ENCODE measurements at regions of chr17 and their contacts with region 1.

Region 1: DNA sequence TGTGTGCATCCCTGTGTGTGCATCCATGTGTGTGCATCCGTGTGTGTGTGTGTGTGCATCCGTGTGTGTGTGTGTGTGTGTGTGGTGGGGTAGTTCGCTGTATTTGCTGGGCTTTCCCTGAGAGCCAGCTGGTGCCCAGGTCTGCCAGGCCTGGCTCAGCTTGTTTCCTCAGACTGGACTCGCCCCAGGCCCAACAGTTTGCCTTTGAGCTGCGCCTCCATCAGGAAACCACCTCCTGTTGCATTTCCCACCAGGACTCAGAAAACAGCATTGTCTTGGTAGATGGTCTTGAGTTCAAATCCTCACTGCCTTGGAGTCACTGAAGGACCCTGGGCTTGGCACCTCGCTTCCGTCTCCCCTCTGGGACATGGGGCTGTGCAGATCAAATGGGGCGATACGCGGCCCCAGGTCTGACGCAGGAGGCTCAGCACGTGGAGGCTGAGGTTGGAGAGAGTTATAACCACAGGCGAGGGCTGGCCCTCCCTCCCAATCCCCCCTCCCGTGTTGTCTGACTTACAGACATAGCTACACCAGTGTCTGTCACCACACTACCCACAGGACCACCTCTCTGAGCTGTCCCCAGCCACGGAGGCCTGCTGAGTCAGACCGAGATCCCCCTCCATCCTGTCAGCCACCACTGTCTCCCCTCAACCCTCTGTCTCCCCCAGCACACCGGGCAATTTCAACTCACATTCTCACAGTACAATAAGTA is 4.7 kb downstream of the ITGAE start:
- DNase-seq: peak; percentile 99
- ATAC-seq: peak; percentile 76
- H3K4me3 Mint-ChIP-seq: peak overlapping the region; percentile 43
- H3K27ac Mint-ChIP-seq: peak overlapping the region; percentile 83
- H3K4me1 Mint-ChIP-seq: peaks cover 66% of the 10 kb centered on the region
- H3K27me3 Mint-ChIP-seq: no peaks in the 10 kb centered on the region
- CTCF ChIP-seq: no peak

Region 2: GRCh38 chr17:3556916-3557750 is 239.1 kb before region 1 on chr17:
- CTCF ChIA-PET with region 1: no interaction called
- POLR2A ChIA-PET with region 1: no interaction called
- intact Hi-C with region 1: no loop called
- DNase-seq: no peak
- ATAC-seq: no peak
- H3K4me3 Mint-ChIP-seq: no peak overlapping the region
- H3K27ac Mint-ChIP-seq: no peak overlapping the region
- H3K4me1 Mint-ChIP-seq: peaks cover 13% of the 10 kb centered on the region
- H3K27me3 Mint-ChIP-seq: peaks cover 14% of the 10 kb centered on the region
- CTCF ChIP-seq: no peak

Region 3: GRCh38 chr17:3762922-3763776 is 33.1 kb before region 1 on chr17:
- CTCF ChIA-PET with region 1: interaction called, 7 read pairs
- POLR2A ChIA-PET with region 1: interaction called, 21 read pairs
- intact Hi-C with region 1: loop called (anchors 5 kb)
- DNase-seq: peak; percentile 79
- ATAC-seq: peak; percentile 67
- H3K4me3 Mint-ChIP-seq: peak overlapping the region; percentile 43
- H3K27ac Mint-ChIP-seq: peak overlapping the region; percentile 97
- H3K4me1 Mint-ChIP-seq: peaks cover 53% of the 10 kb centered on the region
- H3K27me3 Mint-ChIP-seq: peaks cover 6% of the 10 kb centered on the region
- CTCF ChIP-seq: no peak

Region 4: DNA sequence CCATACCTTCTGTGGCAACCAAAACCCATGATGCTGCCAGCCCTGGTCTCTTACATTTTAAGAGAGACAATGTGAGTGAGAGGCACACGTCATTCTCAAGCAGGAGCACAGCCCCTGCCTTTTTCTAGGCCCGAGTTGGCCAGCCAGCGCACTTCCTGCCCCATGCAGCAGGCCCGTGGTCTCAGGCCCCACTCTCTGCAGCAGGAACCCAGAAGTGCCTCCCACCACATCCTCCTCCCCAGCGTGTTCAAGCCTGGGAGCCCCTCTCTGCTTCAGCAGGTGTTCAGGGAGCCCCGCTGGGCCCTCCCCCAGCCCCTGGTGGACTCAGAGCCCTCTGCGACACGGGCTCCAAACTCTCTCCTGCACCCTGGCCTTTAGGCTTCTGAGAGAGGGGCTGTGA is 25.8 kb before region 1 on chr17:
- CTCF ChIA-PET with region 1: interaction called, 3 read pairs
- POLR2A ChIA-PET with region 1: interaction called, 21 read pairs
- intact Hi-C with region 1: no loop called
- DNase-seq: peak; percentile 88
- ATAC-seq: peak; percentile 79
- H3K4me3 Mint-ChIP-seq: no peak overlapping the region
- H3K27ac Mint-ChIP-seq: peak overlapping the region; percentile 88
- H3K4me1 Mint-ChIP-seq: peaks cover 60% of the 10 kb centered on the region
- H3K27me3 Mint-ChIP-seq: peaks cover 9% of the 10 kb centered on the region
- CTCF ChIP-seq: no peak

Region 5: GRCh38 chr17:4375039-4375748 is 578.9 kb after region 1 on chr17:
- CTCF ChIA-PET with region 1: no interaction called
- POLR2A ChIA-PET with region 1: no interaction called
- intact Hi-C with region 1: loop called (anchors 10 kb)
- DNase-seq: peak; percentile 90
- ATAC-seq: peak; percentile 86
- H3K4me3 Mint-ChIP-seq: peak overlapping the region; percentile 22
- H3K27ac Mint-ChIP-seq: peak overlapping the region; percentile 87
- H3K4me1 Mint-ChIP-seq: peaks cover 15% of the 10 kb centered on the region
- H3K27me3 Mint-ChIP-seq: no peaks in the 10 kb centered on the region
- CTCF ChIP-seq: no peak